AG04449 (cell line): ENCODE measurements at regions of chr3 and their contacts with region 1.

Region 1: DNA sequence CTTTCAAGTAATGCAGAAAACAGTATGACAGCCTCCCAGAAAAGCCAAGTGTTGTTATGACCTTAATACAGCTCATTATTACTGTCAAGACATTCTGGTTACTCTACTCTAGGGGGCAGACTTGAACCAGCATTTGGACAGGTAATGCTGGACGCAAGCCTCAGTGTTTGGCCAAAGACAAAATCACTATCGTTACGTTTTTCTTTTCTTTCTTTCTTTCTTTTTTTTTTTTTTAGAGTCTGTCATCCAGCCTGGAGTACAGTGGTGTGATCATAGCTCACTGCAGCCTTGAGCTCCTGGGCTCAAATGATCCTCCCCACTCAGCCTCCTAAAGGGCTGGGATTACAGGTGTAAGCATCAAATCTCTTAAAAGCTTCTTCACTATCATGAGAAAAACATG is 29.4 kb upstream of the TMEM45A start:
- DNase-seq: peak; percentile 12
- H3K4me3 ChIP-seq: no peak overlapping the region
- CTCF ChIP-seq: peak; percentile 66

Region 2: DNA sequence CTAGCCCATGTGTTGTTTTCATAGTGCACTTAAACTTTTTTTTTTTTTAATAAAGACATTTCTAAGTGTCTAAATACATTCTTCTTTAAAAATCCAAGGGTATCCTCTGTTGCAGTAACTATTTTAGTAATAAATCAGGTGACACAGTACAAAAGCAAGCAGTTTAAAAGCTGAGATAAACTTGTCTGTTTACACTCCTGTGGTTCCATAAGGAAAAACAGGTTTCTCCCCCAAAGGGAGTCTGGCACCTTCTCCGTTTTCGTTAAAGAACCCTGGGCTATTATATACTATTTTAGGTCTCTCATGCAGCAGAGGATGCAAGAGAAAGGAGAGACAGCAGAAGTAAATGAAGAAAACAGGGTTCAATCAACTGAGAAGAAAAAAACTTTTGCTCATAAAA is 13.8 kb before region 1 on chr3:
- CTCF ChIA-PET with region 1: interaction called, 57 read pairs
- POLR2A ChIA-PET with region 1: no interaction called
- DNase-seq: no peak
- H3K4me3 ChIP-seq: no peak overlapping the region
- CTCF ChIP-seq: no peak

Region 3: DNA sequence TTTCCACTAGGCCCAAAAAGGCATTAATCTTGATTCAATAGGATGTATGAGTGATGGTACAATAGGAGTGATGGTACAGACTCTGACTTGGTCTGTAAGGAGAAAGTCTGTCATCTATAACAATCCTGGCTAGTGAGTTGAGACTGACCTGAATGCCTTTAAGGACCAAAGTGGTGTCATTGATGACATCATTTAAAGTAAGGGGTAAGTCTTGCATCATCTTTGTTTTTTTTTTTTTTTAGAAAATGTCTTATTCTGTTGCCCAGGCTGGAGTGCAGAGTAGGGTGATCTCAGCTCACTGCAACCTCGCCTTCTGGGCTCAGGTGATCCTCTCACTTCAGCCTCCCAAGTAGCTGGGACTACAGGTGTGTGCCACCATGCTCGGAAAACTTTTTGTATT is 23.8 kb after region 1 on chr3:
- CTCF ChIA-PET with region 1: interaction called, 30 read pairs
- POLR2A ChIA-PET with region 1: no interaction called
- DNase-seq: no peak
- H3K4me3 ChIP-seq: no peak overlapping the region
- CTCF ChIP-seq: no peak

Region 4: DNA sequence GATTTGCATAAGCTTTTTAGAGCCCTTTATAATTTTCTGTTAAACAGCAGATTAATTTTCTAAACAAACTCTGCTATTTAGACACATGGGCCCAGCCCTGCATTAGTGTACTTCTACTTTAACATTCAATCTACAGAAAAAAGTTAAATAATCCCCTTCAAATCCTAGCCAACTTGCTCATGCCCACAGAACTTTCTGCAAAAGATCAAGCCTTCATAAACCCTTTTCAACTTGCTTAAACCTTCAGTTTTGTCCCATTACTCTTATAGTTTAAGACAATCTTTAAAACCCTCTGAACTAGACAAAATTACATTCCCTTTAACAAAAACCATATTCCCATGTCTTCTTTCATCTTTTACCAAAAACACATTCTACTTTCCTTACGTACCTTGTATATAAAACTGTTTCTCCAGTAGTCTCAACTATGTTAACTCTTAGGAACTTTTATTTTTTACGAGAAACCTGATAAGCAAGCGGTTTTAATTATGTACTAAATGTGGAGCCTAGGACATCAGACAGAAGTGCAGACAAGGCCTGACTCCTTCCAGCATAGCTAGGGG is 121.2 kb after region 1 on chr3:
- CTCF ChIA-PET with region 1: interaction called, 406 read pairs
- POLR2A ChIA-PET with region 1: no interaction called
- DNase-seq: no peak
- H3K4me3 ChIP-seq: no peak overlapping the region
- CTCF ChIP-seq: no peak

Region 5: GRCh38 chr3:100603469-100603868 is 140.5 kb after region 1 on chr3:
- CTCF ChIA-PET with region 1: interaction called, 13 read pairs
- POLR2A ChIA-PET with region 1: no interaction called
- DNase-seq: no peak
- H3K4me3 ChIP-seq: no peak overlapping the region
- CTCF ChIP-seq: peak; percentile 61

Region 6: GRCh38 chr3:100719136-100719535 is 256.1 kb after region 1 on chr3:
- CTCF ChIA-PET with region 1: interaction called, 16 read pairs
- POLR2A ChIA-PET with region 1: no interaction called
- DNase-seq: no peak
- H3K4me3 ChIP-seq: no peak overlapping the region
- CTCF ChIP-seq: no peak